MCF 10A (cell line): ENCODE measurements at regions of chr5 and their contacts with region 1.

Region 1: DNA sequence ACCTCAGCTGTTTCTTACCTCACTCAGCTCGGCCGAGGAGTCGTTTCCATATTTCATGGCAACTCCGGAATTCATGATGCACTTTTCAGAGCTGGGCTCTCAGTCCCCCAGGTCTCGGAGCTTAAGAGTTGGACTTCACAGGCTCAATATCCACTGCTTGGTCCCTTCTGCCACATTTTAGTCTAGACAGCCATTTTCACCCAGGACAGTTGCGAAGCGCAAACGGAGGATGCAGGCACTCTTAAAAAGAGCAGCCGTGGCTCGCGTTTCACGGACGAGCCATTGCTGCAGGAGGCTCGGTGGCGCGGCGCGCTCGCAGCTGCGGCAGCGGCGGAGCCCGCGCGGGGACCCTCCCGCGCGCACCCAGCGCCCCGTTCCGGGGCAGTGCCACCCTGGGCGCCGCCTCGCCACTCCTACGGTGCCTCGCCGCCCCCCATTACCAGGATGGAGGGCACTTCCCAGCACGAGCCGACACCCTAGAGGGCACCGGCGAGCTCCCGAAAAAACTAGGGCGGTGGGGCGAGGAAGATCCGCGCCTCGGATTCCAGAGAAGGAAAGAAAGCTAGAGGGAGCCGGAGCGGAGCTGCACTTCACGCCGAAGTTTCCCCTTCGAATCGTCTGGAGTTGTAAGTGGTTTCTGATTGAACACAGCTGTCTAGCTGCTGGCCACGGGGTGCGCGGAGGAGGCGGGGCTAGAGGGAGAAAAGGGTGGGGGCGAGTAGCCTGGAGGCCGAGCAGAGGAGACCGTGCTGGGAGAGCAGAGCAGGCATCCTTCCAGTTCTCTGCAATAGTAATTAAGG is 140.3 kb downstream of the TSSK1B start:
- DNase-seq: peak; percentile 83
- H3K4me3 Mint-ChIP-seq: peak overlapping the region; percentile 82
- H3K27ac Mint-ChIP-seq: peak overlapping the region; percentile 54
- H3K4me1 Mint-ChIP-seq: peaks cover 13% of the 10 kb centered on the region
- H3K27me3 Mint-ChIP-seq: no peaks in the 10 kb centered on the region
- CTCF ChIP-seq: no peak

Region 2: GRCh38 chr5:112811023-112811422 is 483.5 kb before region 1 on chr5:
- CTCF ChIA-PET with region 1: no interaction called
- POLR2A ChIA-PET with region 1: no interaction called
- intact Hi-C with region 1: no loop called
- DNase-seq: no peak
- H3K4me3 Mint-ChIP-seq: no peak overlapping the region
- H3K27ac Mint-ChIP-seq: no peak overlapping the region
- H3K4me1 Mint-ChIP-seq: no peaks in the 10 kb centered on the region
- H3K27me3 Mint-ChIP-seq: no peaks in the 10 kb centered on the region
- CTCF ChIP-seq: no peak

Region 3: GRCh38 chr5:113123618-113124017 is 170.9 kb before region 1 on chr5:
- CTCF ChIA-PET with region 1: interaction called, 4 read pairs
- POLR2A ChIA-PET with region 1: interaction called, 3 read pairs
- intact Hi-C with region 1: loop called (anchors 2 kb)
- DNase-seq: peak; percentile 31
- H3K4me3 Mint-ChIP-seq: no peak overlapping the region
- H3K27ac Mint-ChIP-seq: no peak overlapping the region
- H3K4me1 Mint-ChIP-seq: no peaks in the 10 kb centered on the region
- H3K27me3 Mint-ChIP-seq: no peaks in the 10 kb centered on the region
- CTCF ChIP-seq: no peak

Region 4: DNA sequence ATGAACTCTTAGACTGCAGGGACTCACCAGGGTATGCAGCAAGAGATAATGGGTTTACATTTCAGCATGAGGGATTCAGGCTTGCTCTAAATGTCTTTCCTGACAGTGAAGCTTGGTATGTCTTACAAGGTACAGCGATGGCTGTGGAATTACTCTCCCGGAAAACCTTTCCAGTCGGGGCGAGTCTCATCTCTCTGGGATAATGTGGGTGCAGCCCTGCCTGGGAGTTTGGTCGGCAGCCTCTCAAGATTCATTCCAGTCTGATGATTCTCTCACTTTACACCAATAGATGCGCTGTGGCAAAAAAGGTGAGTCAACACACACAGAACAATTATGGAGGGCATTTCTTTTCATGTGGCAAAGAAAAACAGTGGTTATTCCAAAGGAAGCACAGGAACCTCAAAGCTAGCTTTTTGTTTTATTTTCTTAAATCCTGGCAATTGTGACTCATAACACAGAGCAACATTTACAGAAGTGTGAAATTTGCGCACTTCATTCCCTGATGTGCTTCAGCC is 127.6 kb before region 1 on chr5:
- CTCF ChIA-PET with region 1: interaction called, 3 read pairs
- POLR2A ChIA-PET with region 1: interaction called, 8 read pairs
- intact Hi-C with region 1: loop called (anchors 2 kb)
- DNase-seq: peak; percentile 94
- H3K4me3 Mint-ChIP-seq: peak overlapping the region; percentile 60
- H3K27ac Mint-ChIP-seq: peak overlapping the region; percentile 87
- H3K4me1 Mint-ChIP-seq: peaks cover 66% of the 10 kb centered on the region
- H3K27me3 Mint-ChIP-seq: no peaks in the 10 kb centered on the region
- CTCF ChIP-seq: no peak

Region 5: DNA sequence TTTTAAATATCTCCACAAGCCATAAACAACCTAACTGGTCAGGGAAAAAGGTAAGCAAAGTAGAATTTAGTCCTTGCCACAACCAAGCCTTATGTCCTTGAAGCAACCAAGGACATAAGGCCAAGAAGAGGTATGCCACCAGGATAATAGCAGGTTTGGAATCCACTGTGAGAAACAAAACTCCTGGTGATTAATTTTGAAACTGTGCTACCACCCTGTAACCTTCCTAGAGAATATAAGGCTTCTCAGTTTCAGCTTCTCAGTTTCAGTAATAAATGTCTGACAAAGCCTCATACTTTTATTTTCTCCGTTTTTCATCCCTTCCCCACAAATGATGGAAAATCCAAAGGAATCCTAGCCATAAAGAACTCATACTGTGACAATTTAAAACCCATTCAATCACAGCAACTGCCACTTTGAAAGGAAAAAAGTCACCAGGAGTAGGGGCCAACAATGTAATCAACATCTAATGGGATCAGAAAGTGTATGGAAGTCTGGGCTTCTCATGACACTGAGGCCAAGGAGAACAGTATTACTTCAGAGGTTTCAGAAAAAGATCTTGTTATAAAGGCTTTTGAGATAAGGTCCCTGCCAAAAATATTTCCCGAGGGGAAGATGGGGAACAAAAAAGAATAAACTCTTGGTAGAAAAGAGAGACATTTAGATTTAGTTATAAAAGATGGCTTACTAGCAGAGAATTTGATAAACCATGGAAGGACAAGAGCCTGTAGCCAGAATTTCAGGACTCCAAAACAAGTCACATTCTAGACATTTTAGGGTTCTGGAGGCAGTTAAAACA is 48.9 kb before region 1 on chr5:
- CTCF ChIA-PET with region 1: interaction called, 4 read pairs
- POLR2A ChIA-PET with region 1: interaction called, 25 read pairs
- intact Hi-C with region 1: no loop called
- DNase-seq: no peak
- H3K4me3 Mint-ChIP-seq: no peak overlapping the region
- H3K27ac Mint-ChIP-seq: no peak overlapping the region
- H3K4me1 Mint-ChIP-seq: peaks cover 17% of the 10 kb centered on the region
- H3K27me3 Mint-ChIP-seq: no peaks in the 10 kb centered on the region
- CTCF ChIP-seq: no peak

Region 6: DNA sequence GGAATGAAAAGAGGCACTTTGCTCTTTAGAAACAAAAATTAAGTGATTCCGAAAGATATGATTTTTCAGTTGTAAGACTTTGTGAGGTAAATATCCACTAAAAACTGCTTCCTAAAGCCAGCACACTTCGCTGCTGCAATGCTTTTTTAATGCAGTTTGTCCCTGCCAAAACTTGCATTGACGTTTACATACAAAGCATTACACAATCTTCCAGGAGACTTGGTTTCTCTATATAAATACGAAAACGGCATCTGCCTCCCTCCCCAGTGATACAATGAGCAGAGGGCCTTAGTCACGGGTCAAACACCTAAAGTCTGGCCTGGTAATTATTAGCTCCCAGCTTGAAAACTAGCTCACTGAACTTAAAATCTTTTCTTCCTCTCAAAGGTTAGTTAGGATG is 30.5 kb before region 1 on chr5:
- CTCF ChIA-PET with region 1: interaction called, 7 read pairs
- POLR2A ChIA-PET with region 1: interaction called, 24 read pairs
- intact Hi-C with region 1: no loop called
- DNase-seq: peak; percentile 86
- H3K4me3 Mint-ChIP-seq: no peak overlapping the region
- H3K27ac Mint-ChIP-seq: peak overlapping the region; percentile 63
- H3K4me1 Mint-ChIP-seq: peaks cover 42% of the 10 kb centered on the region
- H3K27me3 Mint-ChIP-seq: no peaks in the 10 kb centered on the region
- CTCF ChIP-seq: no peak

Region 7: DNA sequence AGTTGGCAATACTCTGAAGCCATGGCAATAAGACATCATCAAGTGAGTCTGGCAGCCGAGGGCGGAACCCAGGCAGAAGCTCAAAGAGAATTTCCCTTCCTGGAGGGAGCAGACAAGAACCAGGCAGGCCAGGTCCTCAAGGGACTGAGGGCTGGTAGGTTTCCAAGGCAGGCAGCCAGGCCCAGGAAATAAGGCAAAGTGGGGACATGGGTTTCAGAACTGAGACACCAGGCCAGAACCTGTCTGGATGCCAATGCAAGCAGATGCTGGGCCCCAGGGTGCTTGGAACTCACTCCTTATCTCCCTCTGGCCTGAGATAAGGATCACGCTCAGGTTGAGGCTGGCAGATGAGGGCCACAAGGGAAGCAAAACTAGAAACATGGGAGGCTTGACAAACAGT is 131.4 kb after region 1 on chr5:
- CTCF ChIA-PET with region 1: no interaction called
- POLR2A ChIA-PET with region 1: no interaction called
- intact Hi-C with region 1: no loop called
- DNase-seq: no peak
- H3K4me3 Mint-ChIP-seq: no peak overlapping the region
- H3K27ac Mint-ChIP-seq: no peak overlapping the region
- H3K4me1 Mint-ChIP-seq: peaks cover 17% of the 10 kb centered on the region
- H3K27me3 Mint-ChIP-seq: no peaks in the 10 kb centered on the region
- CTCF ChIP-seq: no peak

Region 8: GRCh38 chr5:113520429-113520828 is 225.9 kb after region 1 on chr5:
- CTCF ChIA-PET with region 1: no interaction called
- POLR2A ChIA-PET with region 1: no interaction called
- intact Hi-C with region 1: no loop called
- DNase-seq: peak; percentile 20
- H3K4me3 Mint-ChIP-seq: no peak overlapping the region
- H3K27ac Mint-ChIP-seq: no peak overlapping the region
- H3K4me1 Mint-ChIP-seq: peaks cover 23% of the 10 kb centered on the region
- H3K27me3 Mint-ChIP-seq: no peaks in the 10 kb centered on the region
- CTCF ChIP-seq: no peak